Left cardiac atrium (tissue), 4 donors: ENCODE measurements at regions of chr12 and their contacts with region 1.

Region 1: GRCh38 chr12:25130741-25131188 is 64.2 kb downstream of the DNAI7 start:
- DNase-seq: no peak
- ATAC-seq: no peak

Region 2: GRCh38 chr12:24991209-24992049 is 139.3 kb before region 1 on chr12:
- intact Hi-C with region 1: loop called (anchors 2 kb)
- DNase-seq: no peak
- ATAC-seq: peak; percentile 65 to 77

Region 3: DNA sequence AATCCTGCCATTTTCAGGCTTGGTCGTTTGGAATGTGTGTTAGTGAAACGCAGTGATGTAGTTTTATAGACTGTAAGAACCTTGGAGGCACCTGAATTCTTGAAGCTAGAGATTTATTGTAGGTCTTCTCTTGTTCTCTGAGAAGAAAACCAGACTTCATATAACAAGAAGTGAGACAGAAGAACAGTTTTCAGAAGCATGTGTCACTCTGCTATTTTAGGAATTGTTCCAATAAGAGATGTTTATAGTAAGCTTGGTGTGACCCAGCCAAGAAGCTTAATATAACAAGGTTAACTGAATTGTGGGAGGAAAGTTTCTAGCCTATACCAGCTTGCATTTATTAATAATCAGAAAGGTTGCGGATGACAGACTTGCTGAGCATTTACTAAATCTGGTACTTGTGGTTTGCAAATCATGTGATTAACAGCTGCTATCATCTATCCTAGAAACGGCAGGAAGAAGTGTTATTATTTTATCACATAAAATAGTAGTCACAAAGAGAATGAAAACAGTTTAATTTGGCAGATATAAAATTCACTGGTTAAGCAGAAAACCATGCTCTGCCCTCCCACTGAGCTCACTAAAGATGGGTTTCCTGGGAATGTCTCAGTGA is 132.7 kb before region 1 on chr12:
- intact Hi-C with region 1: loop called (anchors 2 kb)
- DNase-seq: no peak
- ATAC-seq: peak in 1 of 2 donors; percentile 83